CD4-positive, alpha-beta memory T cell (primary cell): ENCODE measurements at regions of chr14 and their contacts with region 1.

Region 1: GRCh38 chr14:50321009-50321660 is 9.0 kb downstream of the DMAC2L start:
- DNase-seq: peak; percentile 80 to 89 (median 84)
- H3K4me3 ChIP-seq: no peak overlapping the region
- H3K4me3 Mint-ChIP-seq: no peak overlapping the region
- H3K27ac ChIP-seq: peak overlapping the region; percentile 56
- H3K27ac Mint-ChIP-seq: no peak overlapping the region
- H3K4me1 ChIP-seq: peaks cover 17% of the 10 kb centered on the region
- H3K4me1 Mint-ChIP-seq: peaks cover 4 to 20% (median 17%) of the 10 kb centered on the region in 4 donors
- H3K27me3 ChIP-seq: no peaks in the 10 kb centered on the region
- H3K27me3 Mint-ChIP-seq: no peaks in the 10 kb centered on the region

Region 2: GRCh38 chr14:50335389-50335788 is 14.3 kb after region 1 on chr14:
- CTCF ChIA-PET with region 1: interaction called, 33 read pairs
- POLR2A ChIA-PET with region 1: no interaction called
- intact Hi-C with region 1: no loop called
- DNase-seq: no peak
- H3K4me3 ChIP-seq: no peak overlapping the region
- H3K4me3 Mint-ChIP-seq: no peak overlapping the region
- H3K27ac ChIP-seq: no peak overlapping the region
- H3K27ac Mint-ChIP-seq: peak overlapping the region in 5 of 7 donors; percentile 20 to 92 (median 67)
- H3K4me1 ChIP-seq: peaks cover 9% of the 10 kb centered on the region
- H3K4me1 Mint-ChIP-seq: peaks cover 10 to 14% (median 12%) of the 10 kb centered on the region in 4 donors
- H3K27me3 ChIP-seq: no peaks in the 10 kb centered on the region
- H3K27me3 Mint-ChIP-seq: no peaks in the 10 kb centered on the region

Region 3: DNA sequence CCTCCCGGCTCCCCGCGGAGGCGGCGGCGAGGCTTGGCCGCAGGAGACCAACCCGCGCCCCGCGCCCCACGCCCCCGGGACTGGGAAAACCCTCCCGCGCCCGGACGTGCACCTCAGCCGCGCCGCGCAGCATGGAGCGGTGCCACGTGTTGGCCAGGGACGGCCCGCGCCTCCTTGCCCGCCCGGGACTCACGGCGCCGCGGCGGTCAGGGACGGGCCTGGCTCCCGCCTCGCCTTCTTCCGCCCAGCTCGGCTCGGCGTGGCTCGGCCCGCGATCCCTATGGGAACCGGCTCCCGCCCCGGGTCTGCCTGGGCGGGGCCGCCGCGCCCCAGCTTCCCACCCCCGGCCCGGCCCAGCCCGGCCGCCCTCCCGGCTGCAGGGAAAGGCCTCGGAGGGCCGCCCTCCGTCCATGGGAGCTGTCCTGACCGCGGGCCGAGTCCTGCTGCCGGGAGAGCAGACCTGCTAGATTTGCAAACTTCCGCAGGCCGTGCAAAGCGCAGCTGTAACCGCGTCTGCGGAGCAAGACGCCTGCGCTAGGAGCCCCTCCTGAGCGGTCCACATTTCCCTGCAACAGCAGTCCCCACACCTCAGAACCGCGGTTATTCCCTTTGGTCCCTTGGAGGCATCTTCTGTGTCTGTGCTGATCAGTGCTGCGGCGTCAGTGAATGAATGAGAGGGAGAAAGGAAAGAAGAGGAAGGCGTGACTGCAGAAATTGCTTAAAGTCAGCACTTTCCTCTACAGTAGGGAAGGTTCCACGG is 75.7 kb after region 1 on chr14 and contains the start of gene CDKL1:
- CTCF ChIA-PET with region 1: interaction called, 14 read pairs
- POLR2A ChIA-PET with region 1: interaction called, 4 read pairs
- intact Hi-C with region 1: loop called (anchors 1 kb)
- DNase-seq: peak; percentile 9 to 46 (median 24)
- H3K4me3 ChIP-seq: peak within 1 kb of the TSS; percentile 39 to 73
- H3K4me3 Mint-ChIP-seq: peak within 1 kb of the TSS; percentile 88 to 97 (median 90)
- H3K27ac ChIP-seq: no peak within 1 kb of the TSS
- H3K27ac Mint-ChIP-seq: peak within 1 kb of the TSS in 6 of 7 donors; percentile 3 to 92 (median 65)
- H3K4me1 ChIP-seq: peaks cover 14% of the 10 kb centered on the region
- H3K4me1 Mint-ChIP-seq: peaks cover 8 to 16% (median 12%) of the 10 kb centered on the region in 4 donors
- H3K27me3 ChIP-seq: no peaks in the 10 kb centered on the region
- H3K27me3 Mint-ChIP-seq: peaks cover 0 to 2% of the 10 kb centered on the region in 2 donors
- total RNA-seq, gene CDKL1: 6.4 to 6.5 TPM

Region 4: DNA sequence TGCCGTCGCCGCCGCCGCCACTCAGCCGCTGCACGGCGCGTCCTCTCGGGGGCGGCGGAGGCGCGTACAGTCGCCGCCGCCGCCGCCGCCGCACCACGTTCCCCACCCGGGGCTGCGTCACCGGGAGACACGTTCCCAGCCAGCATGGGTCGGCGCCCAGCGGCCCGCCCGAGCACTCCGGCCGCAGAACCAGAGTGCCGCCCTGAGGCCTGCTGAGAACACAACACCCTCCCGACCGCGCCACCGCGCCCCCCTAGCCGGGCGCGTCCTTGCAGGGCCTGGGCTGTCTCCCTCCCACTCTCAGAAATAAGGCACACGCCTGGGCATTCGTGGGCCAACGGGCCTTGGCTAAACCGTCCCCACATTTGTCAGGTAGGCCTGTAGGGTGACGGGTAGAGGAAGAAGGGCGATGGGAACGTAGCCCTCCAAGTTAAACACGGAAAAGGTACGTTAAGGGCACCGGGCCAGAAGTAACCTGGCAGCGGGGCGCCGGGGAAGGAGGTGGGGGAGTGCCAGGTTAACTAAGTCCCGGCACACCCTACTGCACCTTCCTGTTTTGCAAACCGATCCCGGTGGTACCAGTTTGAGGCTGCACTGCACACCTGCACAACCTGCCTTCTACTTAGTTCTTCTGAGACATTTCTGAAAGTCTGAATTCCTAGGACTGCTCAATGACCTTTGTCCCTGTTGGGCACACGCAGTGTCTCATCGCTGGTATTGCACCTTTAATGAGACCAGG is 211.5 kb after region 1 on chr14 and contains the start of gene MAP4K5:
- CTCF ChIA-PET with region 1: interaction called, 31 read pairs
- POLR2A ChIA-PET with region 1: interaction called, 12 read pairs
- intact Hi-C with region 1: loop called (anchors 1 kb)
- DNase-seq: peak; percentile 85 to 89 (median 88)
- H3K4me3 ChIP-seq: peak within 1 kb of the TSS; percentile 26 to 68
- H3K4me3 Mint-ChIP-seq: peak within 1 kb of the TSS; percentile 88 to 94 (median 93)
- H3K27ac ChIP-seq: peak within 1 kb of the TSS; percentile 69
- H3K27ac Mint-ChIP-seq: peak within 1 kb of the TSS; percentile 85 to 95 (median 91)
- H3K4me1 ChIP-seq: peaks cover 46% of the 10 kb centered on the region
- H3K4me1 Mint-ChIP-seq: peaks cover 33 to 50% (median 43%) of the 10 kb centered on the region in 4 donors
- H3K27me3 ChIP-seq: no peaks in the 10 kb centered on the region
- H3K27me3 Mint-ChIP-seq: no peaks in the 10 kb centered on the region
- total RNA-seq, gene MAP4K5: 42.6 to 43.0 TPM

Region 5: GRCh38 chr14:50778721-50779483 is 457.8 kb after region 1 on chr14:
- CTCF ChIA-PET with region 1: interaction called, 11 read pairs
- POLR2A ChIA-PET with region 1: no interaction called
- intact Hi-C with region 1: loop called (anchors 1 kb)
- DNase-seq: no peak
- H3K4me3 ChIP-seq: no peak overlapping the region
- H3K4me3 Mint-ChIP-seq: peak overlapping the region in 4 of 8 donors; percentile 7 to 77 (median 46)
- H3K27ac ChIP-seq: no peak overlapping the region
- H3K27ac Mint-ChIP-seq: peak overlapping the region; percentile 6 to 93 (median 82)
- H3K4me1 ChIP-seq: peaks cover 47% of the 10 kb centered on the region
- H3K4me1 Mint-ChIP-seq: peaks cover 34 to 73% (median 45%) of the 10 kb centered on the region in 4 donors
- H3K27me3 ChIP-seq: no peaks in the 10 kb centered on the region
- H3K27me3 Mint-ChIP-seq: no peaks in the 10 kb centered on the region